ENCODE measurements at regions of chr18 and their contacts with region 1.

Region 1: GRCh38 chr18:74652392-74652988 is 54.8 kb downstream of the ZNF407 start:
- DNase-seq: peak; percentile 81
- H3K4me3 ChIP-seq: no peak overlapping the region
- H3K27ac ChIP-seq: peak overlapping the region; percentile 32
- H3K4me1 ChIP-seq: peaks cover 5% of the 10 kb centered on the region
- H3K27me3 ChIP-seq: no peaks in the 10 kb centered on the region
- CTCF ChIP-seq: peak; percentile 21 to 28
- POLR2A ChIP-seq: no peak

Region 2: DNA sequence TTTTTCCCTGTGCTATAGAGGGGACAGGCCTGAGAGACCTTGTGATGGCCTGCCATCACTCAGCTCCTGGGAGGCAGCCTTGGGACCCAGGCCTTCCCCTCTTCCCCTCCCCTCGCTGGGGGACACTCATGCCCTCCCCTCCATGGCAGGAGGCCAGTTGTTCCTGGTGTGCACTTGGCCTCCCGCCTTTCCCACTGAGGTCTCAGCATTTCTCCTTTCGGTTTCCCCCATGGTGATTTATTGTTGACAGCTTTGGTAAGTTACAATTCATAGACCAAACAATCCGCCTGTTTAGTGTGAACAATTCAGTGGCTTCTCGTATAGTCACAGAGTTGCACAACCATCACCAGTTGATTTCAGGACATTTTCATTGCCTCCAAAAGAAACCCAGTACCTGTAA is 128.4 kb before region 1 on chr18:
- CTCF ChIA-PET with region 1: no interaction called
- POLR2A ChIA-PET with region 1: no interaction called
- dilution Hi-C with region 1: no loop called
- intact Hi-C with region 1: no loop called
- DNase-seq: peak; percentile 13
- H3K4me3 ChIP-seq: no peak overlapping the region
- H3K27ac ChIP-seq: no peak overlapping the region
- H3K4me1 ChIP-seq: no peaks in the 10 kb centered on the region
- H3K27me3 ChIP-seq: peaks cover 0 to 9% of the 10 kb centered on the region in 2 experiments
- CTCF ChIP-seq: no peak
- POLR2A ChIP-seq: no peak

Region 3: GRCh38 chr18:74869904-74870863 is 217.7 kb after region 1 on chr18:
- CTCF ChIA-PET with region 1: no interaction called
- POLR2A ChIA-PET with region 1: no interaction called
- dilution Hi-C with region 1: no loop called
- intact Hi-C with region 1: loop called (anchors 10 kb)
- DNase-seq: no peak
- H3K4me3 ChIP-seq: no peak overlapping the region
- H3K27ac ChIP-seq: no peak overlapping the region
- H3K4me1 ChIP-seq: no peaks in the 10 kb centered on the region
- H3K27me3 ChIP-seq: no peaks in the 10 kb centered on the region
- CTCF ChIP-seq: no peak
- POLR2A ChIP-seq: no peak

Region 4: DNA sequence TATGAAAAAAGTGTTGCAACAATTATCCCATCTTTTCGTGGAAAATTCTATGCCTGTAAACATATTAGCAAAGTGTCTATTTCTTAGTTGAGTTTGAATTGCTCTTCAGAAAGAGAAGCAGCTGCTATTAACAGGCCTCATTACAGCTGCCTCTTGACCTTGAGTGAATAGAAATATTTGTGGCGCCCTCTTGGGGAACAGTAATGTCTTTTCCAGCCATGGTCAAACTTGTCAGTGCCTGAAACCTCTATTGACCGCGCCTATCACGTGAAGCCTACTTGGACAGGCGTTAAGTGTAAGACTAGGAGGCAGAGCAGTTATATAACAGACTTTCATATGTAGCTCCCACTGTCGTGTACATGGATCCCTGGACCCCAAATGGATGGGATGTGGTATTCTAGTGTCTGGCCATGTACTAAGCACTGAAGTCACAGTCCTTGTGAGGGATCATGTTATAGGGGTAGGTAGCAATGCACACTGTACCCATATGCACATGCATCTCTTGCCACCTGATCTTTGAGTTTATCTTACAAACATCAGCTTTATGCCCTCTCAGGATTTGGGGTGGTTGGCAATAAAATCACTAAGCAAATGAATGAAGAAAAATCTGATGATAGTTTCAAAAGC is 311.4 kb after region 1 on chr18:
- CTCF ChIA-PET with region 1: interaction called, 14 read pairs
- POLR2A ChIA-PET with region 1: no interaction called
- dilution Hi-C with region 1: no loop called
- intact Hi-C with region 1: loop called (anchors 1 kb)
- DNase-seq: peak; percentile 62
- H3K4me3 ChIP-seq: no peak overlapping the region
- H3K27ac ChIP-seq: no peak overlapping the region
- H3K4me1 ChIP-seq: no peaks in the 10 kb centered on the region
- H3K27me3 ChIP-seq: no peaks in the 10 kb centered on the region
- CTCF ChIP-seq: peak; percentile 19 to 45
- POLR2A ChIP-seq: no peak

Region 5: DNA sequence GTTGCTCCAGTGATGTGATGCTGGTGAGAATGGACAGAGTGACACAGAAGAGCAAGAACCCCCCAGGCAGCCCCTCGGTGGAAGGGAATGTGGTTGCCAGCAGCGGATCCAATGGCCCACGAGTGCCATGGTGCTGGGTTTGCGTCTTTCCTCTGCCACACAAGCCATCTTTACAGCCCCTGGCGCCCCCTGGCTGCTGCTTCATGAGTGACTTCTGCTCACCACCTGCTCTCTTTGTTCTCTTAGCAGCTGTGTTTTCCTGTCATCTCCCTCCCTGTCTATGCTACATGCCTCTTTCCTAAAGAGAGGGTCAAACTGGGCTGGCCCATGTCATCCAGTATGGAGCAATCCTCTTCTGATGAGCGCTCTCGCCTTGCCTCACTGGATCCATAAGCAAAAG is 1075.0 kb after region 1 on chr18:
- CTCF ChIA-PET with region 1: no interaction called
- POLR2A ChIA-PET with region 1: no interaction called
- dilution Hi-C with region 1: no loop called
- intact Hi-C with region 1: loop called (anchors 10 kb)
- DNase-seq: no peak
- H3K4me3 ChIP-seq: no peak overlapping the region
- H3K27ac ChIP-seq: no peak overlapping the region
- H3K4me1 ChIP-seq: no peaks in the 10 kb centered on the region
- H3K27me3 ChIP-seq: no peaks in the 10 kb centered on the region
- CTCF ChIP-seq: no peak
- POLR2A ChIP-seq: no peak

Region 6: GRCh38 chr18:76349067-76349715 is 1696.7 kb after region 1 on chr18:
- CTCF ChIA-PET with region 1: interaction called, 28 read pairs
- POLR2A ChIA-PET with region 1: no interaction called
- dilution Hi-C with region 1: no loop called
- intact Hi-C with region 1: loop called (anchors 1 kb)
- DNase-seq: peak; percentile 59
- H3K4me3 ChIP-seq: no peak overlapping the region
- H3K27ac ChIP-seq: no peak overlapping the region
- H3K4me1 ChIP-seq: no peaks in the 10 kb centered on the region
- H3K27me3 ChIP-seq: no peaks in the 10 kb centered on the region
- CTCF ChIP-seq: peak; percentile 79 to 83
- POLR2A ChIP-seq: no peak